HEK293 (cell line): ENCODE measurements at regions of chr10 and their contacts with region 1.

Region 1: GRCh38 chr10:98045785-98046389 is 15.5 kb upstream of the CRTAC1 start:
- H3K4me3 ChIP-seq: no peak overlapping the region
- H3K27ac ChIP-seq: no peak overlapping the region
- H3K4me1 ChIP-seq: no peaks in the 10 kb centered on the region
- CTCF ChIP-seq: 0 out of 2 replicates have a peak, but pooled peaks have one; percentile 47

Region 2: DNA sequence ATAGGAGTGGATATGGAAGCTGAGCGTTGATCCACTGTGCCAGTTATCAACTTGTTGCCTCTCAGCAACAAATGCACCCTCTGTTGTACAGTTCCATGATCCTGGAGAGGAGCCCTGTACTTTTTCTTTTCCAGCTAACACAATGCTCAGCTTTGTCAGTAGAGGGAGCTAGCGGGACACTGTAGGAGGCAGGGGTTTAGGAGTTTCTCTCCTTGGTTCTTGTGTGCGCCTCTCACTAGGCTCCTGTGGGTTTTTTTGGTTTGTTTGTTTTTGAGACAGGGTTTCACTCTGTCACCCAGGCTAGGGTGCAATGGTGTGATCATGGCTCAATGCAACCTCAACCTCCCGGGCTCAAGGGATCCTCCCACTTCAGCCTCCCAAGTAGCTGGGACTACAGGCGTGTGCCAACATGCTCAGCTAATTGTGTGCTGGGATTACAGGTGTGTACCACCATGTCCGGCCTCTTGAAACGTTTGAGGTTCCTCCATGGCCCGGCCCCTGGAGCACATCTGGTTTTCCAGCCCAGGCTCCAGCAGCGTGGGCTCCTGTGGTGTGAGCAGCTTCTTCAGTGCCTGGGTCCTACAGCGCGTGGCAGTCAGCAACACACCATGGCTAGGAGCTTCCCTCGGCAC is 344.3 kb before region 1 on chr10:
- CTCF ChIA-PET with region 1: interaction called, 14 read pairs
- POLR2A ChIA-PET with region 1: no interaction called
- H3K4me3 ChIP-seq: no peak overlapping the region
- H3K27ac ChIP-seq: no peak overlapping the region
- H3K4me1 ChIP-seq: no peaks in the 10 kb centered on the region
- CTCF ChIP-seq: peak; percentile 82

Region 3: GRCh38 chr10:97921581-97922021 is 124.3 kb before region 1 on chr10:
- CTCF ChIA-PET with region 1: interaction called, 137 read pairs
- POLR2A ChIA-PET with region 1: no interaction called
- H3K4me3 ChIP-seq: no peak overlapping the region
- H3K27ac ChIP-seq: no peak overlapping the region
- H3K4me1 ChIP-seq: no peaks in the 10 kb centered on the region
- CTCF ChIP-seq: no peak

Region 4: DNA sequence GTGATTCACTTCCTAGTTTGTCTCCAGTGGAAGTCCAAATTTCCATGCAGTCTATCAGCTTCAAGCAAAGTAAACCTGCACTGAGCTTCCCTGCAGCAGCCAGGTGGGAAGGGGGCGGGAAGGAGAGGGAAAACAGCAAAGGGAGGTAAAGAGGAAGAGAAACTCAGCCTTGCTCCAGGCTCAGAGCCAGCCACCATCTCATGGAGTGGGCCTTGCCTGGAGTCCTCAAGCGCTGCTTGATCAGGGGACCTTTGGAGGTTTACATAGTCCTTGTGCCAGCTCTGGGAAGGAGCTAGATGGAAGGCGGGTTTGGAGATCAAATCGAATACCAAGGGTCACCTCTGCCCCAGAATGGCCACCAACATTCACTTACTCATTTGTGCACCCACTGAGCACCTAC is 22.9 kb before region 1 on chr10:
- CTCF ChIA-PET with region 1: interaction called, 92 read pairs
- POLR2A ChIA-PET with region 1: no interaction called
- H3K4me3 ChIP-seq: no peak overlapping the region
- H3K27ac ChIP-seq: no peak overlapping the region
- H3K4me1 ChIP-seq: no peaks in the 10 kb centered on the region
- CTCF ChIP-seq: no peak

Region 5: GRCh38 chr10:98033515-98033914 is 12.4 kb before region 1 on chr10:
- CTCF ChIA-PET with region 1: interaction called, 92 read pairs
- POLR2A ChIA-PET with region 1: interaction called, 14 read pairs
- H3K4me3 ChIP-seq: no peak overlapping the region
- H3K27ac ChIP-seq: no peak overlapping the region
- H3K4me1 ChIP-seq: no peaks in the 10 kb centered on the region; the same call in 1 of the 2 replicates
- CTCF ChIP-seq: no peak

Region 6: GRCh38 chr10:98309366-98310355 is 263.8 kb after region 1 on chr10:
- CTCF ChIA-PET with region 1: interaction called, 17 read pairs
- POLR2A ChIA-PET with region 1: no interaction called
- H3K4me3 ChIP-seq: no peak overlapping the region
- H3K27ac ChIP-seq: no peak overlapping the region
- H3K4me1 ChIP-seq: no peaks in the 10 kb centered on the region
- CTCF ChIP-seq: peak; percentile 84